Transverse colon (tissue), 4 donors: ENCODE measurements at regions of chr3 and their contacts with region 1.

Region 1: GRCh38 chr3:158659454-158660237 is 12.8 kb downstream of the LXN start:
- DNase-seq: peak; percentile 63
- H3K4me3 ChIP-seq: no peak overlapping the region
- H3K27ac ChIP-seq: peak overlapping the region in 1 of 4 donors; percentile 25
- H3K4me1 ChIP-seq: peaks cover 0 to 18% (median 3%) of the 10 kb centered on the region in 4 donors
- H3K27me3 ChIP-seq: no peaks in the 10 kb centered on the region
- CTCF ChIP-seq: peak; percentile 58 to 74 (median 68)
- EP300 ChIP-seq: no peak
- POLR2A ChIP-seq: no peak

Region 2: DNA sequence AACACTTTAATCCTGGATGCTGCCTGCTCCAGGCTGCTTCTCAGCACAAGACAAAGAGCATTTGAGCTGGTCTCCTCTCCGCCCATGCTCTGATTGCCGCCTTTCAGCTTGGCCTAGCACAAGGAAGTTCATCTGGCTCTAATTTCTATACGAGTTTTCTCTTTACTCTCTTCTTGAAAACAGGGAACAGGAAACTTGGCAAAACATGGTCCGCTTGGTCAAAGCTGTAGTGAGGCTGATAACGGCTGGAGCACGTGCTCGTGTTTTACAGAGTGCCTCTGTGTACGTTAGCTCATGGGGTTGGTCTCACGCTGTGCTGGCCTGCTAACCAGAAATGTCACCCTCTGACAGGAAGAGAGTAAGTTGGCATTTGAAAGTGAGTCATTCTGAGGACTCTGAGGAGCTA is 53.5 kb after region 1 on chr3:
- in situ Hi-C with region 1: loop called in 1 of 4 experiments (anchors 5 kb)
- intact Hi-C with region 1: no loop called
- DNase-seq: peak; percentile 52
- H3K4me3 ChIP-seq: no peak overlapping the region
- H3K27ac ChIP-seq: peak overlapping the region; percentile 50 to 62 (median 60)
- H3K4me1 ChIP-seq: peaks cover 8 to 30% (median 16%) of the 10 kb centered on the region in 4 donors
- H3K27me3 ChIP-seq: no peaks in the 10 kb centered on the region
- CTCF ChIP-seq: no peak
- EP300 ChIP-seq: no peak
- POLR2A ChIP-seq: no peak